Mammary epithelial cell (primary cell): ENCODE measurements at regions of chr6 and their contacts with region 1.

Region 1: DNA sequence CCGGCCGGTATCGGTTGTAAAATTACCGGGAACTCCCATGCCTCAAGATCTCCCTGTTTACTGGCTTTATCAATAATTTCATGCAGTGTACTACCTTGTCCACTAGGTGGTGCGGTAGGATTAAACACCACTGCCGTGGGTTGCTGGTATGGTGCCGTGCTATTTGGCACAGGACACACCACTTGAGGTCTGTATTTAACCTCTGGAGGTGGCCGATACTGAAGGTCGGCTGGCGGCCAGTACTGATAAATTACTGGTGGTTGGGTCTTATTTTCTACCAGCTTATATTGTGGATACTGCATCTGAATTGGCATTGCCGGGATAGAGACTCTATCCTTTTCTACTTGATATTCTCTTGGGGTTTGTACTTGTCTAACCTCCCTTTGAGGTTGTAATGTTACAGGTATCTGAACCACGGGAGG is 14.3 kb upstream of the PTCRA start:
- DNase-seq: peak; percentile 85
- H3K4me3 ChIP-seq: peak overlapping the region; percentile 8 to 16 (median 12)
- H3K27ac ChIP-seq: peak overlapping the region; percentile 9
- H3K4me1 ChIP-seq: peaks cover 8% of the 10 kb centered on the region
- H3K27me3 ChIP-seq: no peaks in the 10 kb centered on the region
- CTCF ChIP-seq: peak; percentile 74

Region 2: GRCh38 chr6:42661540-42662153 is 239.9 kb before region 1 on chr6:
- CTCF ChIA-PET with region 1: no interaction called
- dilution Hi-C with region 1: no loop called
- in situ Hi-C with region 1: no loop called
- intact Hi-C with region 1: loop called (anchors 1 kb)
- DNase-seq: peak; percentile 51
- H3K4me3 ChIP-seq: no peak overlapping the region
- H3K27ac ChIP-seq: no peak overlapping the region
- H3K4me1 ChIP-seq: no peaks in the 10 kb centered on the region
- H3K27me3 ChIP-seq: no peaks in the 10 kb centered on the region
- CTCF ChIP-seq: peak; percentile 76 to 86

Region 3: GRCh38 chr6:42782622-42783176 is 118.8 kb before region 1 on chr6:
- CTCF ChIA-PET with region 1: no interaction called
- dilution Hi-C with region 1: no loop called
- in situ Hi-C with region 1: no loop called
- intact Hi-C with region 1: no loop called
- DNase-seq: peak; percentile 78
- H3K4me3 ChIP-seq: peak overlapping the region; percentile 69 to 96 (median 93)
- H3K27ac ChIP-seq: peak overlapping the region; percentile 95
- H3K4me1 ChIP-seq: peaks cover 6% of the 10 kb centered on the region
- H3K27me3 ChIP-seq: no peaks in the 10 kb centered on the region
- CTCF ChIP-seq: no peak

Region 4: GRCh38 chr6:42963855-42964605 is 62.5 kb after region 1 on chr6:
- CTCF ChIA-PET with region 1: no interaction called
- dilution Hi-C with region 1: no loop called
- in situ Hi-C with region 1: no loop called
- intact Hi-C with region 1: loop called (anchors 1 kb)
- DNase-seq: peak; percentile 37
- H3K4me3 ChIP-seq: no peak overlapping the region
- H3K27ac ChIP-seq: no peak overlapping the region
- H3K4me1 ChIP-seq: peaks cover 16% of the 10 kb centered on the region
- H3K27me3 ChIP-seq: no peaks in the 10 kb centered on the region
- CTCF ChIP-seq: peak; percentile 21 to 40

Region 5: GRCh38 chr6:43013843-43014433 is 112.4 kb after region 1 on chr6 and contains the starts of genes KLHDC3 and MEA1:
- CTCF ChIA-PET with region 1: interaction called, 10 read pairs
- dilution Hi-C with region 1: no loop called
- in situ Hi-C with region 1: no loop called
- intact Hi-C with region 1: loop called (anchors 2 kb)
- DNase-seq: peak; percentile 100
- H3K4me3 ChIP-seq: peak within 1 kb of the TSS; percentile 86 to 92 (median 91)
- H3K27ac ChIP-seq: peak within 1 kb of the TSS; percentile 51
- H3K4me1 ChIP-seq: peaks cover 18% of the 10 kb centered on the region
- H3K27me3 ChIP-seq: no peaks in the 10 kb centered on the region
- CTCF ChIP-seq: no peak
- total RNA-seq, gene KLHDC3: 36.4 to 56.2 TPM
- total RNA-seq, gene MEA1: 35.2 to 80.3 TPM

Region 6: DNA sequence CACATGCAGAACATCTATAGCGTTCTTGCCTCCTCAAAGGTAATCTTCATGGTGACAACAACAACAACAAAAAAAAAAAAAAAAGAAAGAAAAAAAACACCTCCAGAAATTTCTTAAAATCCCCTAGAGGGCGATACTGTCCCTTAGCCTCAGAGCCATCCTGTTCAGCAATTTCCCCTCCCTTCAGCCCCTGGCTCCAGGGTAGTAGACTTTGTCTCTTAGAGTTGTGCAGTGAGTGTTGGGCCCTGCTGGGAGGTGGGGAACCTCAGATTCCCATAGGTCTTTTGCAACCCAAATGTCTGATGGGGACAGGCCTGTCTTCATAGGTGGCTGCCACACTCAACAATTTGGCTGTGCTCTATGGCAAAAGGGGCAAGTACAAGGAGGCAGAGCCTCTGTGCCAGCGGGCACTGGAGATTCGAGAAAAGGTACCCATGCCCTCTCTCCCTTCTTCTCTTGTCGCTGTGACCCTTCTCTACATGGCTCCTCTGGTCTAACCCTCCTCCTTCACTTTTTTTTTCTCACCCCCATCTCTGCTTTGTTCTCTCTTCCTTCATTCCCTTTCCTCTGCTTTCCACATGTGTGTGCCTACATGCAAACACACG is 168.6 kb after region 1 on chr6:
- CTCF ChIA-PET with region 1: no interaction called
- dilution Hi-C with region 1: no loop called
- in situ Hi-C with region 1: no loop called
- intact Hi-C with region 1: loop called (anchors 2 kb)
- DNase-seq: peak; percentile 40
- H3K4me3 ChIP-seq: no peak overlapping the region
- H3K27ac ChIP-seq: no peak overlapping the region
- H3K4me1 ChIP-seq: no peaks in the 10 kb centered on the region
- H3K27me3 ChIP-seq: no peaks in the 10 kb centered on the region
- CTCF ChIP-seq: peak; percentile 61 to 72

Region 7: GRCh38 chr6:43143235-43144124 is 241.9 kb after region 1 on chr6:
- CTCF ChIA-PET with region 1: no interaction called
- dilution Hi-C with region 1: no loop called
- in situ Hi-C with region 1: loop called in 1 of 2 experiments (anchors 10 kb)
- intact Hi-C with region 1: loop called (anchors 1 kb)
- DNase-seq: peak; percentile 79
- H3K4me3 ChIP-seq: no peak overlapping the region
- H3K27ac ChIP-seq: peak overlapping the region; percentile 23
- H3K4me1 ChIP-seq: peaks cover 21% of the 10 kb centered on the region
- H3K27me3 ChIP-seq: no peaks in the 10 kb centered on the region
- CTCF ChIP-seq: peak; percentile 88 to 98

Region 8: GRCh38 chr6:43334466-43335095 is 433.0 kb after region 1 on chr6:
- CTCF ChIA-PET with region 1: no interaction called
- dilution Hi-C with region 1: no loop called
- in situ Hi-C with region 1: no loop called
- intact Hi-C with region 1: loop called (anchors 1 kb)
- DNase-seq: peak; percentile 47
- H3K4me3 ChIP-seq: no peak overlapping the region
- H3K27ac ChIP-seq: no peak overlapping the region
- H3K4me1 ChIP-seq: no peaks in the 10 kb centered on the region
- H3K27me3 ChIP-seq: no peaks in the 10 kb centered on the region
- CTCF ChIP-seq: peak; percentile 58 to 67